Calu3 (cell line): ENCODE measurements at regions of chr18 and their contacts with region 1.

Region 1: GRCh38 chr18:22465859-22466457 is 48.2 kb upstream of the CTAGE1 start:
- DNase-seq: peak; percentile 70
- H3K4me3 Mint-ChIP-seq: peak overlapping the region; percentile 64
- H3K27ac Mint-ChIP-seq: peak overlapping the region; percentile 100
- H3K4me1 Mint-ChIP-seq: peaks cover 70% of the 10 kb centered on the region
- H3K27me3 Mint-ChIP-seq: no peaks in the 10 kb centered on the region
- CTCF ChIP-seq: no peak

Region 2: GRCh38 chr18:22282311-22283112 is 183.4 kb before region 1 on chr18:
- CTCF ChIA-PET with region 1: no interaction called
- intact Hi-C with region 1: loop called (anchors 2 kb)
- DNase-seq: peak; percentile 69
- H3K4me3 Mint-ChIP-seq: peak overlapping the region; percentile 41
- H3K27ac Mint-ChIP-seq: peak overlapping the region; percentile 98
- H3K4me1 Mint-ChIP-seq: peaks cover 70% of the 10 kb centered on the region
- H3K27me3 Mint-ChIP-seq: no peaks in the 10 kb centered on the region
- CTCF ChIP-seq: no peak